Activated CD4-positive, alpha-beta memory T cell treated with anti-CD3 and anti-CD28 coated beads for 36 hours (primary cell): ENCODE measurements at regions of chr2 and their contacts with region 1.

Region 1: GRCh38 chr2:236352761-236353593 is 88.8 kb upstream of the ASB18 start:
- DNase-seq: peak; percentile 33
- H3K4me3 Mint-ChIP-seq: no peak overlapping the region
- H3K27ac Mint-ChIP-seq: no peak overlapping the region
- H3K4me1 Mint-ChIP-seq: peaks cover 2% of the 10 kb centered on the region
- H3K27me3 Mint-ChIP-seq: no peaks in the 10 kb centered on the region

Region 2: DNA sequence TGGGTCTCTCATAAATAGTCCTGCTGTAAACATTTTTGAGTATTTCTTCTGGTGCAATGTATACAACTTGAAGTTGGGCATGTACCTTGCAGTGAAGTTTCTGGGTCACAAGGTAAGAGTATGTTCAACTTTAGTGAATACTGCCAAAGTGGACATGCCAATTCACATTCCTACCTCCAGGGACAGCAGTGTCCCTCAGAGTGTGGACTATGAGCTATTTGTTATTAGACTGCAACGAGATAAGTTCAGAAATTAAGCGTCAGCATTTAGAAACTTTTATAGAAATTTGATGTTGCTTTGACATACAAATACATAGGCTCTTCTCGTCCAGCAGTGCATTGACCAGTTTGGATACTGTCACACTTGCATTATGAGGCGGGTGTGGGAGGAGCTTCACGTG is 209.5 kb after region 1 on chr2:
- CTCF ChIA-PET with region 1: no interaction called
- POLR2A ChIA-PET with region 1: no interaction called
- intact Hi-C with region 1: no loop called
- DNase-seq: no peak
- H3K4me3 Mint-ChIP-seq: no peak overlapping the region
- H3K27ac Mint-ChIP-seq: no peak overlapping the region
- H3K4me1 Mint-ChIP-seq: peaks cover 23% of the 10 kb centered on the region
- H3K27me3 Mint-ChIP-seq: no peaks in the 10 kb centered on the region

Region 3: GRCh38 chr2:237026981-237027711 is 674.2 kb after region 1 on chr2:
- CTCF ChIA-PET with region 1: interaction called, 4 read pairs
- POLR2A ChIA-PET with region 1: no interaction called
- intact Hi-C with region 1: loop called (anchors 1 kb)
- DNase-seq: peak; percentile 60
- H3K4me3 Mint-ChIP-seq: no peak overlapping the region
- H3K27ac Mint-ChIP-seq: no peak overlapping the region
- H3K4me1 Mint-ChIP-seq: no peaks in the 10 kb centered on the region
- H3K27me3 Mint-ChIP-seq: peaks cover 2% of the 10 kb centered on the region

Region 4: GRCh38 chr2:237072067-237072931 is 719.3 kb after region 1 on chr2:
- CTCF ChIA-PET with region 1: interaction called, 7 read pairs
- POLR2A ChIA-PET with region 1: no interaction called
- intact Hi-C with region 1: loop called (anchors 1 kb)
- DNase-seq: peak; percentile 81
- H3K4me3 Mint-ChIP-seq: no peak overlapping the region
- H3K27ac Mint-ChIP-seq: no peak overlapping the region
- H3K4me1 Mint-ChIP-seq: no peaks in the 10 kb centered on the region
- H3K27me3 Mint-ChIP-seq: no peaks in the 10 kb centered on the region